H1 (cell line): ENCODE measurements at regions of chr20 and their contacts with region 1.

Region 1: GRCh38 chr20:38859070-38859690 is 53.7 kb downstream of the PPP1R16B start:
- DNase-seq: no peak
- H3K4me3 ChIP-seq: no peak overlapping the region
- H3K27ac ChIP-seq: no peak overlapping the region
- H3K4me1 ChIP-seq: peaks cover 0 to 3% (median under 1%) of the 10 kb centered on the region in 4 experiments; a peak in 3 of 7 replicates
- H3K27me3 ChIP-seq: no peaks in the 10 kb centered on the region
- CTCF ChIP-seq: no peak
- EP300 ChIP-seq: no peak
- POLR2A ChIP-seq: no peak
- RAD21 ChIP-seq: no peak

Region 2: GRCh38 chr20:38844963-38845362 is 14.2 kb before region 1 on chr20:
- CTCF ChIA-PET with region 1: interaction called, 12 read pairs
- POLR2A ChIA-PET with region 1: interaction called, 8 read pairs
- DNase-seq: no peak
- H3K4me3 ChIP-seq: no peak overlapping the region
- H3K27ac ChIP-seq: no peak overlapping the region
- H3K4me1 ChIP-seq: peaks cover 0 to 3% (median 0%) of the 10 kb centered on the region in 4 experiments; a peak in 1 of 7 replicates
- H3K27me3 ChIP-seq: no peaks in the 10 kb centered on the region
- CTCF ChIP-seq: no peak
- EP300 ChIP-seq: no peak
- POLR2A ChIP-seq: no peak
- RAD21 ChIP-seq: no peak

Region 3: DNA sequence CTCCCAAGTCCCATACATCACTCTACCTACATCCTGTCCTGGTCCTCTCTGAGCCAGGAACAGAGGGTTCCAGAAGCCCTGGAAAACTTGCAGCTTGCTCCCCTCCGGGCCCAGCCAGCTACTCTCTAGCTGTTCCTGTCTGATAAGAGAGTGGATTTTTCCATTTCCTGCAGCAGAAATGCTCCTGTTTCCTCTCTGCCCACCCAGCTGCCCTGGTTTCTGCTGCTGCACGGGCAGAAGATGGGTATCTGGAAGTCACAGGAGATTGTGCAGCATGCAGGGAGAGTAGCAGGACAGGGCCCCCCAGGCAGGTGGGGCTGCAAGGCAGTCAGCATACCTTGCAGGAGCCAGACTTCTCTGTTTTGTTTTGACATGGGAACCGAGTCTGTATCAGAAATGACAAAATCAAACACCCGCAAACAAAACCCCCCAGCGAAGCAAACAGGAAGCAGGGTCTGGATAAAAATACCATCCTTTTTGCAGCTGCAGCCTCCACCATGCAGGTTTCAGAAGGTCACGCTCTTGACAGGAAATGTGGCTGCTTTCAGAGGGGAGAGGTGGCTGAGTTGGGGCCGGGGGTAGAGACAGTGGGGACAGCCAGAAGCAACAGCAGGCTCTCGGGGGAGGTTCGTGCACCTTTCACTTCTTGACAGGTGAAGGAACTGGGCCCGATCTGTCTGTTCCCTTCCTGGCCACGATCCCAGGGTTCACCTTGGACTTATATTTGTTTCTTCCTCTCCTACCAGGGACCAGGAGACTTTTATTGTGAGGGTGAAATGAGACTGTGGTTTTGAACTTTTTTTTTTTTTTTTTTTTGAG is 16.2 kb after region 1 on chr20:
- CTCF ChIA-PET with region 1: interaction called, 29 read pairs
- POLR2A ChIA-PET with region 1: interaction called, 3 read pairs
- DNase-seq: no peak
- H3K4me3 ChIP-seq: no peak overlapping the region
- H3K27ac ChIP-seq: no peak overlapping the region
- H3K4me1 ChIP-seq: peaks cover 0 to 15% (median 5%) of the 10 kb centered on the region in 4 experiments; a peak in 6 of 7 replicates
- H3K27me3 ChIP-seq: no peaks in the 10 kb centered on the region
- CTCF ChIP-seq: no peak
- EP300 ChIP-seq: no peak
- POLR2A ChIP-seq: no peak
- RAD21 ChIP-seq: no peak

Region 4: DNA sequence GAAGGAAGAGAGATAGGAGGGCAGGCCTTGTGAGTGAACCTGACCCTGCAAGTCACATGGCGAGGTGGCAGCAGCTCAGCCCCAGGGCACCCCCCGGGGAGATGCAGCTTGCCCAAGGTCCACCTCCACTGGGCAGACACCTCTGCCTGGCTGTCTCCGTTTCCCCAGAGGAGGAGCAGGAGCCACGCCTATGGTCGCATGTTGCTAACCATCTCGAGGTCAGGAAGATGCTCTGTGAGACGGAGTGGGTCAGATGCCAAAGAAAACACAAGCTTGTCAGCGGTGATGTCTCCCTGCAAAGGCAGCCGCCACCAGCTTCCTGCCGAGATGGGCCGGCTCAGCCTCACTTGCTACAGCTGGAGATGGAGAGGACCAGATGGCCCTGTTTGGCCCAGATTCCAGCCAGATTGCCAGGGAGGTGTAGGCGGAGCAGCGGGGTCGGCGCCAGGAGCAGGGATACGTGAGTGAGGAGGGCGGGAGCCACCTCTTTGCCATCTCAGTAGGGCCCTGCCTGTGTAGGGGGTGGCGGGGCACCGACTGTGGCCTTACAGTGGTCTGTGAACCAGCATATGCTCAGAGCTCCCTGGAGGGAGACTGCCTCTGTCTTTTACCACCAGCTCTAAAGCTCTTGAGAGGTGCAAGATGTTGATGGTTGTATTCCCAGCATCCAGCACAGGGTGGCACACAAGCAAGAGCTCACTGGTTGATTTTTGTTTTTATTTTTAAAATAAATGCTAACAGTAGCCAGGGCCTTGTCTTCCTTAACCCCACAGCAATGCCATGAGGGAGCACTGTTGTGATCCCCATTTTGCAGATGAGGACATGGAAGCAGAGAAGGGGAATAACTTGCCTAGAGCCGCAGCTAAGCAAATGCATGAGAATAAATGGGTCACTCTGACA is 24.2 kb after region 1 on chr20:
- CTCF ChIA-PET with region 1: interaction called, 21 read pairs
- POLR2A ChIA-PET with region 1: no interaction called
- DNase-seq: no peak
- H3K4me3 ChIP-seq: no peak overlapping the region
- H3K27ac ChIP-seq: no peak overlapping the region
- H3K4me1 ChIP-seq: peaks cover 0 to 7% (median 2%) of the 10 kb centered on the region in 4 experiments; a peak in 5 of 7 replicates
- H3K27me3 ChIP-seq: no peaks in the 10 kb centered on the region
- CTCF ChIP-seq: no peak
- EP300 ChIP-seq: no peak
- POLR2A ChIP-seq: no peak
- RAD21 ChIP-seq: no peak